Aorta (tissue), 5 donors: ENCODE measurements at regions of chr1 and their contacts with region 1.

Region 1: GRCh38 chr1:210822932-210823331 is 311.0 kb downstream of the KCNH1 start:
- DNase-seq: no peak
- ATAC-seq: no peak
- H3K4me3 ChIP-seq: no peak overlapping the region
- H3K27ac ChIP-seq: no peak overlapping the region
- H3K4me1 ChIP-seq: no peaks in the 10 kb centered on the region
- H3K27me3 ChIP-seq: no peaks in the 10 kb centered on the region

Region 2: DNA sequence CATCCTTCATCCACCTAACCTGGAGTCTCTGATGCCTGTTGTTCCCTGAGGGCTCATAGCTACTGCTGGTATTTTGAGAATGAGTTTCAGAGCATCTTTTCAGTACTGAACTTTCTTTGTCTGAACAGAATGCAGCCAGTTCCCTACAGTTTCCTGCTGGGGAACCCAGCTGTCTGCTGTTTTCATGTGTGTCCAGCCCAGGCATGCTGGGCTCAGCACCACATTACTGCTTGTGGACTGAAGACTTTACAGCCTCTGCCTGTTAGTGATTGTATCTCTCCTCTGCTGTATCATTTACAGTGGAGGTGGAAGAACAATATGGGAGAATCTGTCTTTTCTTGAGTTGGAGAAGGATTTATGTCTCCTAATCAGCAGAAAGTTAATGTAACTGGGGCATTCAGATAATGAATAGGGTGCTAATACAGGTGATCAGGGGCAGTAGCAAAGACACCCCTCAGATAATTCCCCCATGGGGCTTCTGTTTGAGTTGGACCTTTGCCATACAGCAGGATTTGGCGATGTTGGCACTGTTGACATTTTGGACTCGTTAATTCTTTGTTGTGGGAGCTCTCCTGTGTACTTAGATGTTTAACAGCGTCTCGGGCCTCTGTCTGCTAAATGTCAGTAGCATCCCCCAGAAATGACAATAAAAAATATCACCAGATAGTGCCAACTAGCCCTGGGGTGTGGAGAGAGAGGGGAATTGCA is 286.5 kb before region 1 on chr1:
- intact Hi-C with region 1: loop called in 1 of 2 experiments (anchors 10 kb)
- DNase-seq: no peak
- ATAC-seq: no peak
- H3K4me3 ChIP-seq: no peak overlapping the region
- H3K27ac ChIP-seq: no peak overlapping the region
- H3K4me1 ChIP-seq: no peaks in the 10 kb centered on the region
- H3K27me3 ChIP-seq: no peaks in the 10 kb centered on the region

Region 3: DNA sequence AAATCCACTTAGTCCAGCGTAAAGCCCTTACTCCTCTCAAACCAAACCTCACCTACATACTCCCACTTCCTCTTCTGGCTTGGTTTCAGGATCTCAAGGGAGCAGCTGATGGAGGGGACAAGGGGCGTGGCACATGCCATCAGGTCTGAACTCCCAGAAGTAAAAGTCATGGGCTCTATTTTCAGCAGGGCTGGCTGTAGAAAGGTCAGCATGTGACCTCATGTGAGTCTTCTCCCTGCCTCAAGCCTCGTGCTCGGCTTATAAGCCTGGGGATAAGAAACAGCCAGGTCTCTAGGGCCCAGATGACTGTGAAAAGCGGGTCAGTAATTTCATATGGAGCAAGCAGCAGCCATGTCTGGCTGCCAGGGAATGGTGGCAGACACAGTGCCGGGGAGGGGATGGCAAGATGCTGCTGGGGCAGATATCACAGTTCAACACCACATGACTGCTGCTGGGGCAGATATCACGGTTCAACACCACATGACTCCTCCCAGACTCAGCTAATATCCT is 83.1 kb after region 1 on chr1:
- intact Hi-C with region 1: no loop called
- DNase-seq: no peak
- ATAC-seq: no peak
- H3K4me3 ChIP-seq: no peak overlapping the region
- H3K27ac ChIP-seq: no peak overlapping the region
- H3K4me1 ChIP-seq: no peaks in the 10 kb centered on the region
- H3K27me3 ChIP-seq: no peaks in the 10 kb centered on the region